Adrenal gland (tissue), 19 donors: ENCODE measurements at regions of chr14 and their contacts with region 1.

Region 1: DNA sequence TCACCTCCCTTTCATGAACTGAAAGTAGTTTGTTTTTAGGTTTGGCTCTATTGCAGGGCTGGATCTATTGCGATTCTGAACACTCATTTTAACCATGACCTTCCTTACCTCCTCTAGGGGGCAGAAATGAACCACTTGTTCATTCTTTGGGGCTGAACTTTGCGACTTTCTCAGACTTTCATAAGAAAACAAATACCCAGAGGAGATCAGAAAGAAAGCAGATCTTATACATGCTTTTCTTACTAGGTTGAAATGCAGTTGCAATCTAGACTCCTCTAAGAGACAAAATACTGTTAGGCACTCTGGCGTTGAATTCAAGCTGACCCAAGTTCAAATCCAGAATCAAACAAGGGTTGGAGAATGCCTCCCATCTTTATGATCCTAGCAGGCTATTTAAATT is 32.6 kb upstream of the PLEKHG3 start:
- DNase-seq: no peak
- H3K4me3 ChIP-seq: no peak overlapping the region
- H3K27ac ChIP-seq: no peak overlapping the region
- H3K4me1 ChIP-seq: no peaks in the 10 kb centered on the region
- H3K27me3 ChIP-seq: no peaks in the 10 kb centered on the region
- CTCF ChIP-seq: peak; percentile 53 to 78 (median 72)
- POLR2A ChIP-seq: no peak

Region 2: DNA sequence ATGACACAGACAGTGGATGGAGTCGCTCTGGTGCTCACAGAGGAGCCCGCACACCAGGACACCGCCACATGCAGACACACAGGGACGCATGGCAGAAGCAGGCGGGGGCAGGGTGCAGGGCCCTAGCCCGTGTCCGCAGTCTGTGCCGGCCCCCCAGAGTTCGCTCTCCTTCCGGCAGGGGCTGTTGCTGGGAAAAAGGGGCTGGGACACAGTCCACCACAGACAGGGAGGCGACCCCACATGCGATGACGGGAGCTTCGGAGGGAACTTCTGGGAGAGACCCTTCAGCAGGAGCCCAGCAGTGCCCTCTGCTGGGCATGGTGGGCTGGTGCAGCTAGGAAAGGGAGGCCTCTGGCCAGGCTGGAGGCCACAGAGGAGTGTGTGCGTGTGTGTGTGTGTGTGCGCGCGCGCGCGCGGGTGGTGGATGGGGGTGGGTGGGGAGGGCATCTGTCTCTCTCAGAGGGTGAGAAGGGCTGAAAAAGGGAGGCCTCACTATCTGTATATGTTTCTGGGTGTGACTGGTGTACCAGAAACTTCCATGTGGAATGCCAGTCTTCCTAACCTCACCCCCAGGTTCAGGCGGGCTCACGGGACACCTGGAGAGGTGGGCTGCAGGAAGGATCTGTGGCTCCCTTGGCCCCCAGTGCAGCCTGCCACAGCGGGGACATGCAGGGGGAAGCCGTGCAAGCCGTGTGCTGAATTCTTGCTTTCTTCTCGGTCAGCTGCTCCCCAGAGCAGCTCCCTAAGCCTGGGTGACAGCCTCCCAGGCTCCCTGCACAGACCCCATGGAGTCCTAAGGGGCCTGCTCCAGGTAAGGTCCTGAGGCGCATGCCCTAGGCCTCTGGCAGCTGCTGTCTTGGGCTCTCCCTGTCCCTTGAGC is 93.3 kb after region 1 on chr14:
- intact Hi-C with region 1: loop called (anchors 5 kb)
- DNase-seq: peak; percentile 62 to 86 (median 72)
- H3K4me3 ChIP-seq: peak overlapping the region in 1 of 4 donors; percentile 42
- H3K27ac ChIP-seq: peak overlapping the region in 2 of 5 donors; percentile 75 to 81
- H3K4me1 ChIP-seq: peaks cover 10 to 37% of the 10 kb centered on the region in 2 donors
- H3K27me3 ChIP-seq: no peaks in the 10 kb centered on the region
- CTCF ChIP-seq: peak; percentile 85 to 95 (median 88)
- POLR2A ChIP-seq: no peak

Region 3: DNA sequence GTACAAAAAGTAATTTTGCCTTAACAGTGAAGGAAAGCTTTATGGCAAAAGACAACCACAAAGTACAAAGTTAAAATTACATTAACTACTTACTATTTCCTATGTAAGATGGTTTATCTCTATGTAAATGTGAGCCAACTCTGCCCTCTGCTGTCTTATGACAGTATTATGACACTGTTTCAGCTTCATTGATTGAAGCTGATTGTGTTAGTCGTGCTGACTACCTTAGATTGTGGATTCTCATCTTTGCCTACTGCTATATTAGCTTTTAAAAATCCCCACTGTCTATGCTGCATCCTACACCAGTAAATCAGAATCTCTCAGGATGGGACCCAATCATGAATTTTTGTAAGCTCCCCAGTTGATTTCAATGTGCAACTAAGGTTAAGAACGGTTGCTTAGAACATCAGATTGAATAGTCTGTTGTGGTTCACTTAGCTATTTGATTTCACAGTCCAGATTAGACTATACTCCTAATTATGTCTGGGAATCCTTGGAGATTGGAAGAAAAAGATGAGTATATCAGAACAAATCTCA is 220.3 kb after region 1 on chr14:
- intact Hi-C with region 1: loop called in 1 of 2 experiments (anchors 5 kb)
- DNase-seq: peak in 4 of 7 donors; percentile 34 to 55 (median 43)
- H3K4me3 ChIP-seq: no peak overlapping the region
- H3K27ac ChIP-seq: no peak overlapping the region
- H3K4me1 ChIP-seq: no peaks in the 10 kb centered on the region
- H3K27me3 ChIP-seq: peaks cover 9% of the 10 kb centered on the region
- CTCF ChIP-seq: peak; percentile 34 to 83 (median 74)
- POLR2A ChIP-seq: no peak